ENCODE measurements at regions of chr18 and their contacts with region 1.

Region 1: DNA sequence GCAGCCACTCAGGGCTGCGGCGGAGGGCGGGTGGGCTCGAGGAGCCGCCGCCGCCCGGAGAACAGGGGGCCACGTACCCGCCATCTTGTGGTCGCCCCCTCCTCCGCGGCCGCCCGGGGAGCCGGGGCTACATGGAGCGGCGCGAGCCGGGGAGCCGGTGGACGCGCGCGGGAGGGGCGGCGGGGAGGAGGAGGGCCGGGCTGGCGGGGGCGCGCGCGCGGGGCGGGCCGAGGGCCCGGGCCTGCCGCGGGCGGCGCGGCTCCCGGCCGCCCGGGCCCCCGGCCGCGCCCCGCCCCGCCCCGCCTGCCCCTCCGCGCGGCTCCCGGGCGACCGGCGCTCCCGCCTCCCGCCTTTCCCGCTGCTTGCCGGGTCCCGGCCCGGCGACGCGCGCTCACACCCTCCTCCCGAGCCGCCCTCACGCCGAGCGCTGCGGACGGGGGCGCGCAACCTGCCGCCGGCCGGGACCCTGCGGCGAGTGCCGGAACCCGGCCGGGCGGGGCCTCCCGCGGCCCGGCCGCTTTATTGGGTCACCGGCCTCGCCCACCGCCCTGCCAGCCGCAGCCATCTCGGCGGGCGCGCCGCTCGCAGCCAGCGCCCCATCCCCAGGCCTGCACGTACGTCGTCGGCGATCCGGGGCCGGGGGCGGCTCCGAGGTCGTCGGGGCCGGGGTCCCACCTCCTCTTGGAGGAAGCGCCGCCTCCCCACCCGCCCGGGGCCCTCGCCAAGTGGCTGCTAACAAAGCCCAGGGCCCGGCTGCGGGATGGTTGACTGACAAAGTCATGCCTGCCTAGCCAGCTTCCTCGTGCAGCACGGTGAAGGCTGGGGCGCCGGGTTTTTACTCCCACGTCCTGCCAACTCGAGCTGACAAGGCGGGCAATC is at the start of gene PPP4R1:
- DNase-seq: peak; percentile 45 to 56 (median 55)
- H3K4me3 ChIP-seq: peak within 1 kb of the TSS; percentile 58 to 78 (median 60)
- H3K4me3 Mint-ChIP-seq: peak within 1 kb of the TSS; percentile 96 to 99
- H3K27ac ChIP-seq: peak within 1 kb of the TSS; percentile 76 to 86
- H3K27ac Mint-ChIP-seq: peak within 1 kb of the TSS; percentile 89 to 97 (median 94)
- H3K4me1 ChIP-seq: peaks cover 27 to 39% of the 10 kb centered on the region in 2 donors
- H3K4me1 Mint-ChIP-seq: peaks cover 43% of the 10 kb centered on the region
- H3K27me3 ChIP-seq: no peaks in the 10 kb centered on the region
- H3K27me3 Mint-ChIP-seq: no peaks in the 10 kb centered on the region
- CTCF ChIP-seq: no peak
- polyA plus RNA-seq, gene PPP4R1: 22.0 to 45.3 (median 24.6) TPM

Region 2: DNA sequence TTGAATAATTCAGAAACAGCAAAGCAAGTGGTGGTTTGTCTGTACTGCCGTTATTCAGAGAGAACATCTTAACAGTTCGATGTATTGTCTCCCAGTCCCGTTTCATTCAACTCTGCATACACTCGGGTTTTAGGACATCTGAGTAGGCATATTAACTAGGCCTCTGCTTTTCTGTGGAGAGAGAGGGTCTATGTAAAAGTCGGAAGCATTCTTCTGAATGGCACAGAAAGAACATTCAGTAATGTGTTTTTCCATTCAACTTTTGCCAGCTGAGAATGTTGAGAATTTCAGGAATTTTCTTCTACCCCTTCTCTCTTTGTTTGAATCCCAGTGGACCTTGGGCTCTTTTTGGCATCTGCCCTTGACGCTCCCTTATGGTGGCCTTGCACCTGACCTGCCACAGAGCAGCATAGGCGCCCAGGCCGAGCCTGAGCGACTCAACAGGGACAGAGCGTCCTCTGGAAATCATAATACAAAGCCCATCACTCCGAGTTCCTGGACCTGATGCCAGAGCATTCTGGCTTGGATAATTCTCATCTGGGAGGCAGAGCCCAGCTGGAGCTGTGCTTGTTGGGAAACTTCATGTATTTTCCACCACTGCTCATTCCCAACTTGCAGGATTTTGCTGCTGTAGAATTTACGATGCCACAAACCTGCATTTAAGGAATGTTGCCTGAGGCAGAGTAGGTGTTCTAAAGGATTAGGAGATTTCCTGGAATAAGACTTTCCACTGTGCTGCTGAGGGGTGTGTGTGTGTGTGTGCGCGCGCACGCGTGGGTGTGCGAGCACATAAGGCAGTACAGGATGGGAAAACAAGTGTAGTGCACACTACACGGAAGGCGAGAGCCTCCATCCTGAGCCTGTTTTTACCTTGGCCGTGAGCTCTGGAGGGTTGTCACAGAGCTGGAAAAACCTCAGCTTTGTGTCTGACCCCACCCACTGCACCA is 193.9 kb after region 1 on chr18:
- intact Hi-C with region 1: loop called in 1 of 2 experiments (anchors 10 kb)
- DNase-seq: no peak
- H3K4me3 ChIP-seq: no peak overlapping the region
- H3K4me3 Mint-ChIP-seq: no peak overlapping the region
- H3K27ac ChIP-seq: no peak overlapping the region
- H3K27ac Mint-ChIP-seq: no peak overlapping the region
- H3K4me1 ChIP-seq: peaks cover 11 to 15% of the 10 kb centered on the region in 2 donors
- H3K4me1 Mint-ChIP-seq: peaks cover 16% of the 10 kb centered on the region
- H3K27me3 ChIP-seq: no peaks in the 10 kb centered on the region
- H3K27me3 Mint-ChIP-seq: no peaks in the 10 kb centered on the region
- CTCF ChIP-seq: no peak

Region 3: GRCh38 chr18:9943311-9943710 is 328.7 kb after region 1 on chr18:
- intact Hi-C with region 1: loop called (anchors 10 kb)
- DNase-seq: no peak
- H3K4me3 ChIP-seq: no peak overlapping the region
- H3K4me3 Mint-ChIP-seq: no peak overlapping the region
- H3K27ac ChIP-seq: no peak overlapping the region
- H3K27ac Mint-ChIP-seq: no peak overlapping the region
- H3K4me1 ChIP-seq: no peaks in the 10 kb centered on the region
- H3K4me1 Mint-ChIP-seq: no peaks in the 10 kb centered on the region
- H3K27me3 ChIP-seq: no peaks in the 10 kb centered on the region
- H3K27me3 Mint-ChIP-seq: peaks cover 0 to under 1% (median 0%) of the 10 kb centered on the region in 3 donors
- CTCF ChIP-seq: no peak

Region 4: DNA sequence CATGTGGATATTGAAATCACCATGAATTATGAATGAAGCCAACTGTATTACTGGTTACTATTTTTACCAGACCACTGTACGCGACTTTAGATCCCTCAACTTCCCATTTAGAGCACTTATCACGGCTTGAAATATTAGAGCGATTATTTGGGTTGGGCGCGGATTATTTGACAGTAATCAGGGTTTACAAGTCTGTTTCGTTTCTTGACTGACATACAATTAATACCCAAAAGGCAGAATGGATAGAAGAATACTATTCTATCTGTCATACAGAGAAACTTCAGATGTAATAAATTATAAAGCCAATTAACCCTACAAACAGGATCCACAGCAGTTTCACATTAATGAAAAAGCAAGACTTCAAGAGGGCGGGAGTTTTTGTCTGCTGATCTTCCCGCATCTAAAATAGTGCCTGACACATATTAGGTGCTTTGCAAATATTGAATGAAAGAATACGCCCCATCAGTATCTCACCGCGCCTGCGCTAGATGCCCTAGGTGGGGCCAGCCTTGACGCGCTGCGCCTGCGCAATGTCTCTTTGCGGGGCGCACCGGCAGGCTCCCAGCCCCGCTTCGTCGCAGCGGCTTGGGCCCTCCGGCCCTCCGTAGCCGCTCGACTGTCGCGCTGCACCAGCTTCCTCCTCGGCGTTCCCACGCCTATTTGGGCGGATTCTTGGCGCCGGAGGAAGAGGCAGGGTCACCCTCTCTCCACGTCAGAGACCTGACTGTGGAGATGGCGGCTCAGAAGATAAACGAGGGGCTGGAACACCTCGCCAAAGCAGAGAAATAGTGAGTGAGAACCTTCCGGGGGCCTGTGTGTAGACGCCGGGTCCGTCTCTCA is 911.0 kb after region 1 on chr18 and contains the start of gene NAPG:
- intact Hi-C with region 1: loop called in 1 of 2 experiments (anchors 10 kb)
- DNase-seq: peak; percentile 91 to 92 (median 92)
- H3K4me3 ChIP-seq: peak within 1 kb of the TSS; percentile 88 to 94 (median 89)
- H3K4me3 Mint-ChIP-seq: peak within 1 kb of the TSS; percentile 93 to 95
- H3K27ac ChIP-seq: peak within 1 kb of the TSS; percentile 84 to 88
- H3K27ac Mint-ChIP-seq: peak within 1 kb of the TSS; percentile 95 to 99 (median 97)
- H3K4me1 ChIP-seq: peaks cover 41 to 52% of the 10 kb centered on the region in 2 donors
- H3K4me1 Mint-ChIP-seq: peaks cover 51% of the 10 kb centered on the region
- H3K27me3 ChIP-seq: no peaks in the 10 kb centered on the region
- H3K27me3 Mint-ChIP-seq: no peaks in the 10 kb centered on the region
- CTCF ChIP-seq: no peak
- polyA plus RNA-seq, gene NAPG: 14.8 to 17.5 (median 15.9) TPM